ENCODE measurements at regions of chr1 and their contacts with region 1.

Region 1: DNA sequence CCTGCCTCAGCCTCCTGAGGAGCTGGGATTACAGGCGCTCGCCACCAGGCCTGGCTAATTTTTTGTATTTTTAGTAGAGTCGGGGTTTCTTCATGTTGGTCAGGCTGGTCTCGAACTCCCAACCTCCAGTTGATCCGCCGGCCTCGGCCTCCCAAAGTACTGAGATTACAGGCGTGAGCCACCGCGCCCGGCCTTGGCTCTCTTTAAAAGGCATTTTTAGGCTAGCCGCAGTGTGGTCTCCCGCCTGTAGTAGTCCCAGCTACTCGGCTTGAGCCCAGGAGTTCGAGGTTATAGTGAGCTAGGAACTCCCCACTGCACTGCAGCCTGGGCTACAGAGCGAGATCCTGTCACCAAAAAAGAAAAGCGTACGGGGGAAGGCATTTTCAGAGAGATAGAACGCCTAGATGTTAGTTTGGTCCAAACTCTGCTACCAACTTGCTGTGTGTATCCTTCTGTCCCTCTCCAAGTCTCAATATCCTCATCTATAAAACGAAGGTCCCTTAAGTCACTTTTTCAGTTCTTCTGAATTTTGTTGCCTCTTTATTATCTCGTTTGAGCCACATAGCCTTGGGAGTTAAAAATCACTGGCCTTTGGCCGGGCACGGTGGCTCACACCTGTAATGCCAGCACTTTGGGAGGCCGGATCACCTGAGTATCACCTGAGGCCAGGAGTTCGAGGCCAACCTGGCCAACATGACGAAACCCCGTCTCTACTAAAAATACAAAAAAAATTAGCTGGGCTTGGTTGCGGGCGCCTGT is 734 bp downstream of the MED18 start:
- DNase-seq: no peak

Region 2: DNA sequence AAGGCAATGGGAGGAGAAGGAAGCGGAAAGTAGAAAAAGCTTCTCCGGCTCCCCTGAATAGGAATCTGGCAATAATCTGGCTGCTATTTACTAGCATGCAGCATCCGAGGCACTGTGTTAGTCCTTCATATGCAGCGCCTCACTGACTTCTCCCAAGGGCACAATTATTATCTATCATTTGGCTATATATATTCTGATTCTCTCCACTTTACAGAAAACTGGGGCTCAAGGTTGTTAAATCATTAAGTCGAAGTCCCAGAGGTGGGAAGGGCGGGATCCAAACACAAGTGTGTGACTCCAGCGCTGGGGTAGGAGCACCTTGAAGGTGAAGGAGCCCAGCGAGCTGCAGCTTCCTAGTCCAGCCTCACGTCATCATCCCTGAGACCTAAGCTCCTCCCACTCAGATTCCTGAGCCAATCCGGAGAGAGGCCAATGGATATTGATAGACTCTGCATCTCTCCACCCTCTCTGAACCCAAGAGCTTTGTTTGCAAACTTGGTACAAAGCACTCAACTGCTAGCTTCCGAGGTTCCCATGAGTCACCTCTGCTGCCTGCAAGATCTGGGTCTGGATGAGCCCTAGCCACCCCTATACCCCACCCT is 224.6 kb before region 1 on chr1:
- CTCF ChIA-PET with region 1: no interaction called
- POLR2A ChIA-PET with region 1: no interaction called
- DNase-seq: peak; percentile 92

Region 3: DNA sequence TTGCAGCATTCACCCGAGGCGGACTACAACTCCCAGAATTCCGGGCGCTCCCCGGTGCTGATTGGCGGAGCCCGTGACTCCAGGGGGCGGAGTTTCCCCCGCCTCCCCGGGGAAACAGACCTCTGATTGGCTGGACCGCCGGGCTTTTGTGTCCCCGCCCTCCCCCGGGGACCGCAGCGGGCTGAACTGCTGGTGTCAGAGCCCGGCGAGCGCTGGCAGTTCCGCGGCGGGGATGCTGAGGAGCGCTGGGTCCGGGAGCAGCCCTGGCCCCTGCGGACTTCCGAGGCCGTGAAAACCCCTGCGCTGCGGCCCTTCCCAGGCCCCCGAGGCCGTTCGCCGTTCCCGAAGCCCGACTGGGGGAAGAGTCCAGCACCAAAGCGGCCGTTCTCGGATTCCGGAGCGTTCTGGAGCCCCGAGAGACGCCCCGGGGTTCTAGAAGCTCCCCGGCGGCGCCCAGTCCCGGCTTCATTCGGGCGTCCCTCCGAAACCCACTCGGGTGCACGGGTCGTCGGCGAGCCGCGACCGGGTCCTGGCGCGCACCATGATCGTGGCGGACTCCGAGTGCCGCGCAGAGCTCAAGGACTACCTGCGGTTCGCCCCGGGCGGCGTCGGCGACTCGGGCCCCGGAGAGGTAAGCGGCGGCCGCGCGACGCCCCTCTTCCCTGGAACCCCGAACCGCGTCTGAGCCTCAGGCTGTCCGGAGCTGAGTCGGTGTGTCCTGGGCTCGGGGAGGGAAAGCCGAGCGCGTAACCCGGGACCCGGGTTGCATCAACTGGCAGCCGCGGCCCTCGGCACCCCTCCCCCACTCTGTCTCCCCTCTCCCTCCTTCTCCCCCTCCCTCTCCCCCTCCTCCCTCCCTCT is 70.0 kb before region 1 on chr1 and contains the start of gene SESN2:
- CTCF ChIA-PET with region 1: no interaction called
- POLR2A ChIA-PET with region 1: interaction called, 17 read pairs
- DNase-seq: peak; percentile 100

Region 4: DNA sequence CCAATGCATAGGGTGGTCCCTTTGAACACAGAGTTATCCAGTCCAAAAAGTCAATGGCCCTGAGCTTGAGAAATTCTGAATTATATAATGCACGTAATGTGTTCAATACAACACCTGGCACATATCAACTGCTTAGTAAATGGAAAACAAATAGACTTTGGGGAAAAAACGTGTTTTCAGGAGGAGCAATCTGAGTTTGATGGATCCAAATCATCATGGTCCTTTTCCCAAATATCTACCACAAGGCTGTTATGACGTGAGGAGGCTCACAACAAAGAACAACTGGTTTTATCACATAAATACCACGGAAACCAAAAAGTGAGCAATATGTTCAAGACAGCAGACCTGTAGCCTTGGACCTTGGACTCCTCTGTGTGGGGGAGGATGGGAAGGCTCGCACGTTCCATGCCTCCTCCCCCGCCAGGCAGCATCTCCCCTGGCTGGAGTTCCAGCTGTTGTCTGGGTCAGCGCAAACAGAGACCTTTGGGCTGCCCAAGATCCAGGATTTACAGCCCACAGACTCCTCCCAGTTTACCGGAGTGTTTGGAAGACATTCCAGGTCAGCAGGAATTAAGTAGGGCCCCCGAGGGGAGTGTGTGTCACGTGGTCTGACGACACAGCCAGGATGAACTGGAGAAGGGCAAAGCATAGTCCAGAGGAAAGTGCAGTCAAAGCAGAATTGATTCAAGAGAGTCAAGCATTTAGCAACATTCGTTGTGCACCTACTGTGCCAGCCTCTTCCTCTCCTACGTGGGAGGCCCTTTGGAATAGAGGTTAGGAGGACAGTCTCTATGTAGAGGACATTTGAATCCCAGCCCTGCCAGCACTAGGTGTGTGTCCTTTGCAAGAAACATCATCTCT is 32.9 kb before region 1 on chr1:
- CTCF ChIA-PET with region 1: interaction called, 3 read pairs
- POLR2A ChIA-PET with region 1: interaction called, 18 read pairs
- DNase-seq: peak; percentile 79

Region 5: DNA sequence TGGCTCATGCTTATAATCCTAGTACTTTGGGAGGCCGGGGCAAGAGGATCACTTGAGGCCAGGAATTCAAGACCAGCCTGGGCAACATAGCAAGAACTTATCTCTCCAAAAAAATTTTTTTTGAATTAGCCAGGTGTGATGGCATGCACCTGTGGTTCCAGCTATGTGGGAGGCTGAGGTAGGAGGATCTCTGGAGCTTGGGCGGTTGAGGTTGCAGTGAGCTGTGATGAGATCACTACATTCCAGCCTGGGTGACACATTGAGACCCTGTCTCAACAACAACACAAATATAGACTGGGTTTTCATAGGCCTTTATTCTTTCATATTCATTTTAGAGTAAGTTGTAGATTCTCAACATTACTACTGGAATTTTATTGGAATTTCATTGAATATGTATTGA is 12.0 kb after region 1 on chr1:
- CTCF ChIA-PET with region 1: no interaction called
- POLR2A ChIA-PET with region 1: interaction called, 15 read pairs
- DNase-seq: no peak

Region 6: DNA sequence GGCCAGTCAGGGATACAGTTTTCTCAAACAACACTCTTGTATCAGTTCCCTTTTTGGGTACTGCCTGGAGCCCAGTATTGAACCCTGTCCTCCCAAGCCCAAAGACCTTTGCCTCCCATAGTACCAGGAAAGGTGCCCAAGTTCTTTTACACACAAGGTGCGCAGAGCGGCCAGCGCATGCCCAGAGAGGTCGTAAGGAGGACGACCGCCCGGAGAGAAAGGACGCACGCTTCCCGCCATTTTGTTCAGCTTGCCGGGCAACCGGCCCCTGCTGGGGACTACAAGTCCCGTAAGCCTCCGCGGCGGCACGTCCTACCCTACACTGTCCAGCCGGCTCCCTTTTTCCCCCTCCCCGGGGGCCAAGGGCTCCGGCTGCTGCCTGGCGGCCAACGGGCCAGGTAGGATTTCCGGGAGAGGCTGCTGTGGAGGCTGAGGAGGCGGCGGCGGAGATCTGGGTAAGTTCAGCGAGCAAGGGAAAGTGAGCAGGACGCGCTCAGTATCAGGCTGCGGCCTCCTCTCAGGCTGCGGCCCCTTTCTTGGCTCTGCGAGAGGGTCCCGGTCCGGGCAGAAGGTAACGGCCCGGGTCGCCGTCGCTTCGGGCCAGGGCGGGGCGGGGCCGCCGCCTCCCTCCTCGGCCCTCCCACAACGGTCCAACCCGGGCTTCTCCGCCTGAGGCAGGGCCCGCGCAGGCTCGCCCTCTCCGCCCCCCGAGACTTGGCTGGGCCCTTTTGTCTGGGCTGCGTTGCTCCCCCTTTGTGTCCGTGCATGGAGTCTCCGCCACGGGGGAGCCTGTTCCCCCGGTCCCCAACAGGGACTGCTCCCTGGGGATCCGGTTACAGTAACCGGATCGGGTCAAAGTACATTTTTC is 40.0 kb after region 1 on chr1 and contains the start of gene PHACTR4:
- CTCF ChIA-PET with region 1: no interaction called
- POLR2A ChIA-PET with region 1: interaction called, 14 read pairs
- DNase-seq: peak; percentile 98

Measured in HEK293T (cell line).